ENCODE measurements at regions of chr7 and their contacts with region 1.

Region 1: DNA sequence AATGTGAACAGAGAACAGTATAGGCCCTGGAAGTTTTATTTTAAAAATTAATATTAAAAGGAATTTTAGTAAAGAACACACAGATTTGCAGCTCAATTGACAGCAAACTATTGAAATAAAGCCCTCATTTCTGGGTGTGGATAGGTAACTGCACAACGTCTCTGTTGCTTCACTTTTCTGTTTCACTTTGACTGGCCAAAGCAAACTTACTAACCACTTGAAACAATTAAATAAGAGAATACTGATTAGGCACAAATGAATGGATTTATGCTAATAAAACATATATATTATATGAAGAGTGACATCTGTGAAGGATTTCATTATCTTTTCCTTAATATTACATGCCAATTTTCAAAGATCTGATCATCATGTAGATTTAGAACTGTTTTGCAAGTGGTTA is 11.9 kb downstream of the ZNF804B start:
- DNase-seq: no peak

Region 2: DNA sequence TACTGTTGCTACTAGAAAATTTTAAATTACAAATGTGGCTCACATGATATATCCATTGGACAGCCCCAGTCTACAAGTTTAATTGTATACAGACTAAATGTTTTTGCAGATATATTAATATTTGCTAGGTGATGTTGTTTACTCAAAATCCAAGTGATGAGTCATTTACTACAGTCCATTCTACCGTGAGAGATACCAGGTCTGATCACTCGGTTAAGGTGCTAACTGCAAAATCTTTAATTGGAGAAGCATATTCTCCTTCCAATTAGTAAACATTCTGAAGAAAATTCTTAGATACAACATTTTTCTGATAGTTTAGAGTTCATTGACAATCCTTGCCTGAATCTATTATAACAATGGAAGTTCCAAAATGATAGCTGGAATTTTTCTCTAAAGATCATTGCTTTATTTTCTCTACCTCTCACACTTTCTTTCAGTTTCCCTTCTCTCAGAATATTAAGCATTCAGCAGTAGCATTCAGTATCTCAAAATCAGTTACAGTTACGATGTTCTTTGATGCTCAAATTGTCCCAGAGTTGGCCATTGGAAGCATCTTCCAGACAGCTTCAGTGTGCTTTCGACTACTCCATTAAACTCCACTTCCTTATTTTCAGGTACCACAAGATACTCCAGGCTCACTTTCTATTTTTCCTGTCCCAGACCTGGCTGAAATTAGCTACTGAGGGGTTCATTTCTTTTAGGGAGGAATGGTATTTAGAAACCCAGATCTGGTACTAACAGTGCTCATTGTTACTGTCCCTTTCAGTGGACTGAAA is 1173.0 kb before region 1 on chr7:
- in situ Hi-C with region 1: no loop called
- DNase-seq: no peak

Region 3: DNA sequence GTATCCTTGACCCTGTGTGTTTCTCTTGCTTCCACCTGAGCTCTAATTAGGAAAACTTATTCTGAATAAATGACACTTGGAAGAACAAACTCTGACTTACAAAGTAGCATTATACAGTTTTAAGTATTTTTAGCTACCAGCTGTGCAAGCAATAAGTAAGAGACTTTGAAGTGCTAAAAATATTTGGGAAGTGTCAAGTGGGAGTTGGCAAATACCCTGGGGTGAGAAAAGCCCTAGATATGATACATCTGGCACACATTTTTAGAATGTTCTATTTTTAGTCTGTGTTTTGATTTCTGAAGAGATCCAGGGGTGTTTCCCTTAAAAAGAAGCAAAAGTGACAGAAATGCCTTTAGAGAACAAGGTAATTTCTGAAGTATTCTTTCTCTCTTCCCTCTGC is 156.9 kb after region 1 on chr7:
- in situ Hi-C with region 1: no loop called
- DNase-seq: no peak

Region 4: DNA sequence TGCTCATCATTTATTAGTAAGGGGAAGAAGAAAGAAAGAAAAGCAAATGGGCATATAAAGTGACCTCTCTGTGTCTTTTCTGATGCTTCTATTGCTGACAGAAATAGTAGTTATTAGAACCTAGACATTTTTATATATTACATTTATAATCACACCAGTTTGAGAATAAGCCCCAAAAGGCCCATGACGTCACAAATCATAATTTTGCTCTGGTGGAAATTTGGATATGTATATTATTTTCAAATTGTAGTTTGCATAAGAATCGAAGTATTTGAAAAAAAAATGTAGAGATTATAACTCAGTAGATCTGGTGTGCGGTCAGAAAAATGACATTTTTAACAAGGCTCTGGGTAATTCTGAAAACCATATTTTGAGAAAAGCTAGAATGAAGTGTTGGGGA is 1281.7 kb after region 1 on chr7:
- in situ Hi-C with region 1: loop called (anchors 10 kb)
- DNase-seq: no peak

Measured in SK-MEL-5 (cell line).